ENCODE measurements at regions of chr7 and their contacts with region 1.

Region 1: GRCh38 chr7:73329861-73330581 is 2.1 kb downstream of the FKBP6 start:
- DNase-seq: peak; percentile 20
- H3K4me3 ChIP-seq: no peak overlapping the region
- H3K27ac ChIP-seq: no peak overlapping the region
- H3K4me1 ChIP-seq: peaks cover 2% of the 10 kb centered on the region
- H3K27me3 ChIP-seq: peaks cover 8 to 13% of the 10 kb centered on the region in 2 experiments
- CTCF ChIP-seq: no peak
- POLR2A ChIP-seq: no peak

Region 2: GRCh38 chr7:73451780-73452398 is 121.9 kb after region 1 on chr7:
- CTCF ChIA-PET with region 1: interaction called, 75 read pairs
- POLR2A ChIA-PET with region 1: no interaction called
- dilution Hi-C with region 1: no loop called
- intact Hi-C with region 1: no loop called
- DNase-seq: peak; percentile 68
- H3K4me3 ChIP-seq: no peak overlapping the region
- H3K27ac ChIP-seq: no peak overlapping the region
- H3K4me1 ChIP-seq: no peaks in the 10 kb centered on the region
- H3K27me3 ChIP-seq: no peaks in the 10 kb centered on the region
- CTCF ChIP-seq: peak; percentile 85 to 88
- POLR2A ChIP-seq: no peak